ENCODE measurements at regions of chr6 and their contacts with region 1.

Region 1: GRCh38 chr6:133952815-133953633 is at the start of gene TBPL1:
- DNase-seq: peak; percentile 85 to 87
- H3K4me3 ChIP-seq: peak within 1 kb of the TSS; percentile 75
- H3K27ac ChIP-seq: peak within 1 kb of the TSS; percentile 59
- H3K4me1 ChIP-seq: peaks cover 32% of the 10 kb centered on the region
- H3K27me3 ChIP-seq: no peaks in the 10 kb centered on the region
- CTCF ChIP-seq: no peak
- total RNA-seq, gene TBPL1: 11.0 and 21.7 TPM in 2 replicates

Region 2: GRCh38 chr6:133966654-133967329 is 13.8 kb after region 1 on chr6:
- CTCF ChIA-PET with region 1: no interaction called
- POLR2A ChIA-PET with region 1: no interaction called
- intact Hi-C with region 1: loop called (anchors 2 kb)
- DNase-seq: no peak
- H3K4me3 ChIP-seq: no peak overlapping the region
- H3K27ac ChIP-seq: no peak overlapping the region
- H3K4me1 ChIP-seq: no peaks in the 10 kb centered on the region
- H3K27me3 ChIP-seq: no peaks in the 10 kb centered on the region
- CTCF ChIP-seq: no peak

Region 3: DNA sequence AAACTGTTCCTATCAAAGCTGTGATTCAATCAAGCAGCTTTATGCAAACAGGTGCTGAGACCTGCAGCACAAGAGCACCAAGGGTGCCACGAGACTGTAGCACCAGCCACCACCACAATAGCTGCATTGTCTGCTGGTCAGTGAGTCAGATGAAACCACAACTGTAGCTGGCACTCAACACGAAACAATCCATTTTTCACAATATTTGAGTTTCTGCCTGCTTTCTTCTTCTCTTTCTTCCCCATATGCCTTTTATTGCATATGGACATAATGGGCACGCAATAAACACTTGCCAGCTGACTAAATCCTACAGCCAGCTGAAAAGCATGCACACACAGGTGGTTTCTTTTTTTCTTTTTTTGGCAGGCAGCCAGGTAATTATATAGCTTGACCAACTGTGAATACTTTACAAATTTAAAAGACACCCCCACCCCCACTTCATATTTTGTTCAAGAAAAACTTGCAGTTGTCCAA is 82.8 kb after region 1 on chr6:
- CTCF ChIA-PET with region 1: no interaction called
- POLR2A ChIA-PET with region 1: interaction called, 21 read pairs
- intact Hi-C with region 1: no loop called
- DNase-seq: peak; percentile 64 to 98
- H3K4me3 ChIP-seq: 0 out of 2 replicates have a peak overlapping the region, but pooled peaks have one; percentile 0
- H3K27ac ChIP-seq: peak overlapping the region; percentile 84
- H3K4me1 ChIP-seq: peaks cover 38% of the 10 kb centered on the region
- H3K27me3 ChIP-seq: no peaks in the 10 kb centered on the region
- CTCF ChIP-seq: no peak